Ascending aorta (tissue), 2 donors: ENCODE measurements at regions of chr1 and their contacts with region 1.

Region 1: GRCh38 chr1:222589462-222590302 is at the start of gene TAF1A:
- DNase-seq: peak; percentile 61 to 92
- H3K4me3 ChIP-seq: peak within 1 kb of the TSS; percentile 72
- H3K27ac ChIP-seq: peak within 1 kb of the TSS; percentile 80 to 85
- H3K4me1 ChIP-seq: peaks cover 3 to 13% of the 10 kb centered on the region in 2 donors
- H3K27me3 ChIP-seq: no peaks in the 10 kb centered on the region
- CTCF ChIP-seq: no peak
- total RNA-seq, gene TAF1A: 8.8 TPM

Region 2: DNA sequence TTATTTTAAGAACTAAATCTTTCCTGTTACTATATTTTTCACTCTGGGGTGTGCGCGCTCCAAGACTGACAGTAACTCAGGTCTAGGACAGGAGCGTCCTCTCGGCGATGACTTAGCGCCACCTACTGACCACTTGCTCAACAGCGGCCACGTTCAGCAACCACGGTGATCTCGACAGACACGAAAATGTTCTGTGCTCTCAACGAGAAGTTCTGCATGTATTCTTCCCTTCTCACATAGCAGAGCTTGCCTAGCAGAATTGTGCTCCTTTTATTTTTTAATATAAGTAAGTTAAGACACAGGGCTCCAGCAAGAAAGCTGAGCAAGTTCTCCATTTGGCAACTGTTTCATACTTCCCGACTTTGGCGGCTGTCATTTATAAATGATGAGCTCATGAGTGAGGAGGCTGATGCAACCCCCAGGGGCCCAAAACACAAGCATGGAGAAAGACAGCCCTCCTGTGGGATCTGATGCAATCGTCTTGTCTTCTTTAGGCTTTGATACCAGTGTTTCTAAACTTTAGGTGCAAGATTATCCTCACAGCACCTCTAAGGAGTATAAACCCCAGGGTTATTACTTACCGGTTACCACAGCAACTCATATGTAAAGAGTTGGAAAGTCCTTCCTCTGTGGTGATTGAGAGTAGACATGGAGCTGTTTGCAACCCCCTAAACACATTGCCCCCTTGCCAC is 134.3 kb before region 1 on chr1:
- intact Hi-C with region 1: no loop called
- DNase-seq: peak in 1 of 2 donors; percentile 88
- H3K4me3 ChIP-seq: peak overlapping the region; percentile 12 to 41
- H3K27ac ChIP-seq: peak overlapping the region in 1 of 2 donors; percentile 36
- H3K4me1 ChIP-seq: no peaks in the 10 kb centered on the region
- H3K27me3 ChIP-seq: no peaks in the 10 kb centered on the region
- CTCF ChIP-seq: peak; percentile 66 to 97 (median 88)

Region 3: DNA sequence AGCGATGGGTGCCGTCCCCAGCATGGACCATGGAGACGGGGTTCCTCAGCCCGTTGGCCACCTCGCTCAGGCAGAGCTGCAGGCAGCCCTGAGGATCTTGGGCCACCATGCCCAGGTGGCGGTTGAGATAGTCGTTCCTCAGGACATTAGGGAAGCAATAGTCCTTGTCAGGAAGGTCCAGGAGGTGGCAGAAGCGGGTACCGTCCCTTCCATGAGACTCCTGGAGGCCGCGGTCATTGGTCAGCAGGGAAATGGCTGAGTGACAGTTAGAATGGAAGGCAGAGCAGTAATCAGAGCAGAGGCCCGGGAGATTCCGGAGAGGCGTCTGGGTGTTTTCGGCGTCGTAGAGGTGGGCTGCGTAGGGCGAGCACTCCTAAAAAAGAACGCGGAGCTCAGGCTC is 45.9 kb before region 1 on chr1:
- intact Hi-C with region 1: no loop called
- DNase-seq: no peak
- H3K4me3 ChIP-seq: no peak overlapping the region
- H3K27ac ChIP-seq: no peak overlapping the region
- H3K4me1 ChIP-seq: peaks cover 0 to 3% of the 10 kb centered on the region in 2 donors
- H3K27me3 ChIP-seq: no peaks in the 10 kb centered on the region
- CTCF ChIP-seq: no peak

Region 4: DNA sequence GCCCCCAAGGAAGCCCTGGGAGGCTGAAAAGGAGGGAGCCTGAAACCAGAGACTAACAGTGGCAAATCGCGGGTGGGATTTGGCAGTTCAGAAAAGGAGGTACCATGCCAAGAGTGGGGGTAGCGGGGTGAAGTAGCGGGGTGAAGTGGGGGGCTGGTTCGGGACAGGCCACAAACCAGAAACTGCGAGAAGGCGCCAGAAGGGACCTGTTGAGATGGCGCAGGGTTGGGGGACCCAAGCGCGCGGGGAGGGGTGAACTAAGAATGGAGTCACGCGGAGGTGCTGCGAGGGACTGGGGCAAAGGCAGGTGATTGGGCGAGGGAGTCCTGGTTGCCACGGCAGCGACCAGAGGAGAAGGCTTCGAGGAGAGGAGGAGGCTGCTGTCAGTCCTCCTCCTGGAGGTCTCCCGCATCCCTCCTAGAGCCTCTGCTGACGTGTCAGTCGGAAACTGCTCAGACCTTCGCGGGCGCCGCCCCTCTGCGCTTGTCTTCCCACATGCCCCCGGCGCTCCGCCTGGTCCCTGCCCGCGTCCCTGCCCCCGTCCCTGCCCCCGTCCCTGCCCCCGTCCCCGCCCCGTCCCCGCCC is 27.8 kb after region 1 on chr1:
- intact Hi-C with region 1: loop called (anchors 1 kb)
- DNase-seq: peak; percentile 84 to 97
- H3K4me3 ChIP-seq: peak overlapping the region; percentile 62 to 68
- H3K27ac ChIP-seq: peak overlapping the region; percentile 43 to 78
- H3K4me1 ChIP-seq: no peaks in the 10 kb centered on the region
- H3K27me3 ChIP-seq: no peaks in the 10 kb centered on the region
- CTCF ChIP-seq: no peak

Region 5: DNA sequence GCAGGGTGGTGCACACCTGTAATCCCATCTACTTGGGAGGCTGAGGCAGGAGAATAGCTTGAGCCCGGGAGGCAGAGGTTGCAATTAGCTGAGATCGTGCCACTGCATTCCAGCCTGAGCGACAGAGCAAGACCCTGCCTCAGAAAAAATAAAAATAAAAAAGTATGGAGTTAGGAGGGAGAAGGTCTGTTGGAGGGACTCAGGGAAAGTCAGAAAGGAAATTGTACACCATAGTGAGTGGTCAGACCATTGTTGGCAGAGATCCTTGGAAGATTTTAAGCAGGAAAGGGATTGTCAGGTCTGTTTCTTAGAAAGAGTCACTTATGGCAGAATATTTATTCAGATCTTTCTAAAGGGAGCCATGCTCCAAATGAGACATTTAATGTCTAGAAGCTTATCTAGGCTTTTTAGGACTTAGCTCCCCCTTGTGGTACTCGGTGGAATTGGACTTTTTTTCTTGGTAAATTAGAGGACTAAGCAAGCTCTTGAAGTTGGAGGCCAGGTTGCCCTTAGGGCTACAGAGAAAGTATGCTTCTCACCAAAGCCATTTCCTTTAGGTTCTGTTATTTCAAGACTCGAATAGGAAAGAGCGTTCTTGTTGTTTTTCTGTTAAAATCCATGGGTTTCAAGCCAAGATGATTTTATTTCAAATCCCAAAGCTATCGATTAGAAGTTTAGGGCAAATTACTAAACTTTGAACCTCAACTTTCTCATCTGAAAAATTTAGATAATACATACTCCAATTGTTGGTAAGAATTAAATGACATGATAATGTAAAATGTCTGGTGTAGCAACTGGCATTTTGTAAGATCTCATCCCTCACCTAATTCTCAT is 44.7 kb after region 1 on chr1:
- intact Hi-C with region 1: loop called (anchors 1 kb)
- DNase-seq: peak in 1 of 2 donors; percentile 84
- H3K4me3 ChIP-seq: no peak overlapping the region
- H3K27ac ChIP-seq: peak overlapping the region in 1 of 2 donors; percentile 51
- H3K4me1 ChIP-seq: peaks cover 0 to 5% of the 10 kb centered on the region in 2 donors
- H3K27me3 ChIP-seq: no peaks in the 10 kb centered on the region
- CTCF ChIP-seq: peak; percentile 71 to 89 (median 75)